ENCODE measurements at regions of chr1 and their contacts with region 1.

Region 1: GRCh38 chr1:214791961-214792360 is 189.0 kb downstream of the CENPF start:
- DNase-seq: peak; percentile 65 to 72
- H3K4me3 ChIP-seq: no peak overlapping the region
- H3K4me3 Mint-ChIP-seq: no peak overlapping the region
- H3K27ac Mint-ChIP-seq: peak overlapping the region; percentile 51
- H3K4me1 ChIP-seq: peaks cover 22% of the 10 kb centered on the region
- H3K4me1 Mint-ChIP-seq: peaks cover 16% of the 10 kb centered on the region
- H3K27me3 ChIP-seq: no peaks in the 10 kb centered on the region
- H3K27me3 Mint-ChIP-seq: no peaks in the 10 kb centered on the region
- CTCF ChIP-seq: no peak

Region 2: GRCh38 chr1:214566158-214567104 is 225.5 kb before region 1 on chr1:
- CTCF ChIA-PET with region 1: no interaction called
- POLR2A ChIA-PET with region 1: no interaction called
- intact Hi-C with region 1: no loop called
- DNase-seq: no peak
- H3K4me3 ChIP-seq: no peak overlapping the region
- H3K4me3 Mint-ChIP-seq: no peak overlapping the region
- H3K27ac Mint-ChIP-seq: no peak overlapping the region
- H3K4me1 ChIP-seq: no peaks in the 10 kb centered on the region
- H3K4me1 Mint-ChIP-seq: peaks cover 5% of the 10 kb centered on the region
- H3K27me3 ChIP-seq: no peaks in the 10 kb centered on the region
- H3K27me3 Mint-ChIP-seq: no peaks in the 10 kb centered on the region
- CTCF ChIP-seq: no peak

Region 3: DNA sequence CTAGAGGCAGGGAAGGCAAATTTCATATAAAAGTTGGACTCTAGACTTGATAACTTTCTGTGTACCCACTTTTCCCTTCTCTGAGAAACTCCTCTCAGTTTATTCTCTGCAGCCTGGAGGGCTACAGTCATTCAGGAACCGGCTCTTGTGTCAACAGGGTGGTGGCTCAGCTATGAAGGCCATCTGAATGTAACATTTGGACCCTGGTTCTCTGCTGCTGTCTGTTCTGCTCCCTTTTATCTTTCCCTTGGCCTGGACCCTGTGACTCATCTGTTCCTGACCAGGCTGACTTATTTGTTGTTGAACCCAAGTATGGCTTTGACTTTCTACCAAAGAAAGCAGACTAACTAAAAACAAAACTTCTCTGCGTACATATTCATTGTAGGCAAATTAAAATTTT is 113.6 kb before region 1 on chr1:
- CTCF ChIA-PET with region 1: no interaction called
- POLR2A ChIA-PET with region 1: no interaction called
- intact Hi-C with region 1: loop called (anchors 1 kb)
- DNase-seq: peak; percentile 75 to 86
- H3K4me3 ChIP-seq: no peak overlapping the region
- H3K4me3 Mint-ChIP-seq: no peak overlapping the region
- H3K27ac Mint-ChIP-seq: peak overlapping the region; percentile 82
- H3K4me1 ChIP-seq: peaks cover 26% of the 10 kb centered on the region
- H3K4me1 Mint-ChIP-seq: peaks cover 23% of the 10 kb centered on the region
- H3K27me3 ChIP-seq: no peaks in the 10 kb centered on the region
- H3K27me3 Mint-ChIP-seq: no peaks in the 10 kb centered on the region
- CTCF ChIP-seq: no peak

Region 4: DNA sequence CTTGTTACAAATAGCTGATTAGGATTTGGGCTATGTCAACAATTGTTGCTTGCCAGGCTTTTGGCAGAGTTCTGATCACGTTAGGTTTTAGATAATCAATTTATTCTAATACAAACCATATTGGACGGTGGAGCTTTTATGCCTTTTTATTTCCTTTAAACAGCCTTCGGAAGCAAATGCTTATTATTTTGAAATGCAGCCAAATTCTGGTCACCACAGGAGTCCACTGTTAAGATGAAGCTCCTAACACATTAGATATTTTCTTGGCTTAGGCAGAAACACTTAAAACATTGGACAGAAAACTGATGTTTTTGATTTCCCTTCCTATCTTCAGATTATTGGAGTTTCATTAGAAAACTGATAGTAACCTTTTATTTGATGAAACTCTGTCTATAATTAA is 106.1 kb before region 1 on chr1:
- CTCF ChIA-PET with region 1: no interaction called
- POLR2A ChIA-PET with region 1: no interaction called
- intact Hi-C with region 1: loop called (anchors 1 kb)
- DNase-seq: no peak
- H3K4me3 ChIP-seq: no peak overlapping the region
- H3K4me3 Mint-ChIP-seq: no peak overlapping the region
- H3K27ac Mint-ChIP-seq: peak overlapping the region; percentile 30
- H3K4me1 ChIP-seq: peaks cover 34% of the 10 kb centered on the region
- H3K4me1 Mint-ChIP-seq: peaks cover 32% of the 10 kb centered on the region
- H3K27me3 ChIP-seq: no peaks in the 10 kb centered on the region
- H3K27me3 Mint-ChIP-seq: no peaks in the 10 kb centered on the region
- CTCF ChIP-seq: no peak

Region 5: GRCh38 chr1:214777364-214777763 is 14.6 kb before region 1 on chr1:
- CTCF ChIA-PET with region 1: no interaction called
- POLR2A ChIA-PET with region 1: no interaction called
- intact Hi-C with region 1: no loop called
- DNase-seq: no peak
- H3K4me3 ChIP-seq: no peak overlapping the region
- H3K4me3 Mint-ChIP-seq: no peak overlapping the region
- H3K27ac Mint-ChIP-seq: no peak overlapping the region
- H3K4me1 ChIP-seq: no peaks in the 10 kb centered on the region
- H3K4me1 Mint-ChIP-seq: no peaks in the 10 kb centered on the region
- H3K27me3 ChIP-seq: no peaks in the 10 kb centered on the region
- H3K27me3 Mint-ChIP-seq: no peaks in the 10 kb centered on the region
- CTCF ChIP-seq: no peak

Region 6: DNA sequence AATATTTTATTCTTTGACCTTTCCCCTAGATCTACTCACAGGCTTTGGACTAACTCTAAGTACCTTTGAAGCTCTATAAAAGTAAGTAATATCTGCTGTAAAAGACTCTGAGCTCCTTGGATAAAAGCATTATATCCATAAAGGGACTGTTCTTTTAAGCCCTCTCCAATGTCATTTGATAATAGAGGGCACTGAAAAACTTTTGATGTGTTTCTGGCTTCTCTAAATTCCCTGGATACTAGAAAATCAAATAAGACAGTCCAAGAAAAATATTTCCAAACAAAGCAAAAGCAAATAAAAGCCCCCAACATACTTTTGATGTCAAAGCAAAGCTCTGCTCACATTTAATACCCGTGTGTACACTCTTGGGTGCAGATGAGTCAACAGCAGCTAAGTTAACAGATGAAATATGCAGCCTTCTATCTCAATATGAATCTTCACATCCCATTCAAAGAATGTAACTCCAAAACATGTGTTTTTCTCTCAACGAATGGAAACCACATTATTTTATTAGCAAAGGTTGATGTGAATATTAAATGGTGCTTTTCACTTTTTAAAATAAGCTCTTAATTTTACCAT is 41.3 kb after region 1 on chr1:
- CTCF ChIA-PET with region 1: no interaction called
- POLR2A ChIA-PET with region 1: no interaction called
- intact Hi-C with region 1: loop called (anchors 1 kb)
- DNase-seq: peak; percentile 42 to 54
- H3K4me3 ChIP-seq: no peak overlapping the region
- H3K4me3 Mint-ChIP-seq: no peak overlapping the region
- H3K27ac Mint-ChIP-seq: no peak overlapping the region
- H3K4me1 ChIP-seq: peaks cover 6% of the 10 kb centered on the region; the same call in 1 of the 2 replicates
- H3K4me1 Mint-ChIP-seq: peaks cover 17% of the 10 kb centered on the region
- H3K27me3 ChIP-seq: no peaks in the 10 kb centered on the region
- H3K27me3 Mint-ChIP-seq: no peaks in the 10 kb centered on the region
- CTCF ChIP-seq: no peak

Region 7: GRCh38 chr1:215376544-215377264 is 584.7 kb after region 1 on chr1:
- CTCF ChIA-PET with region 1: no interaction called
- POLR2A ChIA-PET with region 1: no interaction called
- intact Hi-C with region 1: no loop called
- DNase-seq: no peak
- H3K4me3 ChIP-seq: no peak overlapping the region
- H3K4me3 Mint-ChIP-seq: no peak overlapping the region
- H3K27ac Mint-ChIP-seq: no peak overlapping the region
- H3K4me1 ChIP-seq: no peaks in the 10 kb centered on the region
- H3K4me1 Mint-ChIP-seq: peaks cover 9% of the 10 kb centered on the region
- H3K27me3 ChIP-seq: no peaks in the 10 kb centered on the region
- H3K27me3 Mint-ChIP-seq: no peaks in the 10 kb centered on the region
- CTCF ChIP-seq: no peak